ENCODE measurements at regions of chr2 and their contacts with region 1.

Region 1: DNA sequence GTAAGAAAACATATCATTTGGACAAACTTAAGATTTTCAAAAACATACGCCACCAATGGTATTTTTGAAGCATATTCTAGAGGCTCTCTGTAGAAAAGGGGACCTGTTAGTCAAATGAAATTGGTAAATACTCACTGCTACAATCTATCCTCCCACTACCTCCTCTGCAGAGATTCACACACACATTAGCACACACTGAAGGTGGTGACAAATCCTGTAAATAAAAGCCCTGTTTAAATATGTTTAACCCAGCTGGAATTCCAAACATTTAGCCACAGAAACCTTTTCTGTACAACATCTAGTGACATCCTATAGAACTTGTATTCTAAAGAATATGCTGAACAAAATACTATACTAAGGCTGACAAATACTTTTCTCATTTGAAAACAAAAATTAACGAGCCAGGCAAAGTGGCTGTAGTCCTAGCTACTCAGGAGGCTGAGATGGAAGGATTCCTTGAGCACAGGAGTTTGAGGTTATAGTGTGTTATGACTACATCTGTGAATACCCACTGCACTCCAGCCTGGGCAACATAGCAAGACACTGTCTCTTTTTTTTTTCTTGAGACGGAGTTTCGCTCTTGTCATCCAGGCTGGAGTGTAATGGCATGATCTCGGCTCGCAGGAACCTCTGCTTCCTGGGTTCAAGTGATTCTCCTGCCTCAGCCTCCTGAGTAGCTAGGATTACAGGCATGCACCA is 25.9 kb downstream of the ALS2 start:
- DNase-seq: peak in 1 of 2 experiments; percentile 39
- H3K4me3 ChIP-seq: no peak overlapping the region
- H3K4me3 Mint-ChIP-seq: no peak overlapping the region
- H3K27ac Mint-ChIP-seq: peak overlapping the region; percentile 56
- H3K4me1 ChIP-seq: peaks cover 36% of the 10 kb centered on the region
- H3K4me1 Mint-ChIP-seq: peaks cover 29% of the 10 kb centered on the region
- H3K27me3 ChIP-seq: no peaks in the 10 kb centered on the region
- H3K27me3 Mint-ChIP-seq: no peaks in the 10 kb centered on the region
- CTCF ChIP-seq: no peak

Region 2: DNA sequence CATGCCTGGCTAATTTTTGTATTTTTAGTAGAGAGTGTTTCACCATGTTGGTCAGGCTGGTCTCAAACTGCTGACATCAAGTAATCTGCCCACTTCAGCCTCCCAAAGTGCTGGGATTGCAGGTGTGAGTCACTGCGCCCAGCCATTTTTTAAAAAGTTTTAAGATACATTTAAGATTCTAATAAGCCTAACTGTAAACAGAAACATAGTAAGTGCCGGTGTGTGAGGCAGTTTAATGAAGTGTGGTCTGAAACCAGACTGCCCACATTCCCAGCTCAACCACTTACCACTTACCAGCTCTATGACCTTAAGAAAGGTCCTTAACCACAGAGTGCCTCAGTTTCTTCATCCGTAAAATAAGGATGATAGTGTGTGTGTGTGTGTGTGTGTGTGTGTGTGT is 154.0 kb before region 1 on chr2:
- CTCF ChIA-PET with region 1: no interaction called
- POLR2A ChIA-PET with region 1: no interaction called
- intact Hi-C with region 1: loop called (anchors 5 kb)
- DNase-seq: no peak
- H3K4me3 ChIP-seq: no peak overlapping the region
- H3K4me3 Mint-ChIP-seq: no peak overlapping the region
- H3K27ac Mint-ChIP-seq: no peak overlapping the region
- H3K4me1 ChIP-seq: no peaks in the 10 kb centered on the region
- H3K4me1 Mint-ChIP-seq: no peaks in the 10 kb centered on the region
- H3K27me3 ChIP-seq: no peaks in the 10 kb centered on the region
- H3K27me3 Mint-ChIP-seq: peaks cover 7% of the 10 kb centered on the region
- CTCF ChIP-seq: no peak

Region 3: DNA sequence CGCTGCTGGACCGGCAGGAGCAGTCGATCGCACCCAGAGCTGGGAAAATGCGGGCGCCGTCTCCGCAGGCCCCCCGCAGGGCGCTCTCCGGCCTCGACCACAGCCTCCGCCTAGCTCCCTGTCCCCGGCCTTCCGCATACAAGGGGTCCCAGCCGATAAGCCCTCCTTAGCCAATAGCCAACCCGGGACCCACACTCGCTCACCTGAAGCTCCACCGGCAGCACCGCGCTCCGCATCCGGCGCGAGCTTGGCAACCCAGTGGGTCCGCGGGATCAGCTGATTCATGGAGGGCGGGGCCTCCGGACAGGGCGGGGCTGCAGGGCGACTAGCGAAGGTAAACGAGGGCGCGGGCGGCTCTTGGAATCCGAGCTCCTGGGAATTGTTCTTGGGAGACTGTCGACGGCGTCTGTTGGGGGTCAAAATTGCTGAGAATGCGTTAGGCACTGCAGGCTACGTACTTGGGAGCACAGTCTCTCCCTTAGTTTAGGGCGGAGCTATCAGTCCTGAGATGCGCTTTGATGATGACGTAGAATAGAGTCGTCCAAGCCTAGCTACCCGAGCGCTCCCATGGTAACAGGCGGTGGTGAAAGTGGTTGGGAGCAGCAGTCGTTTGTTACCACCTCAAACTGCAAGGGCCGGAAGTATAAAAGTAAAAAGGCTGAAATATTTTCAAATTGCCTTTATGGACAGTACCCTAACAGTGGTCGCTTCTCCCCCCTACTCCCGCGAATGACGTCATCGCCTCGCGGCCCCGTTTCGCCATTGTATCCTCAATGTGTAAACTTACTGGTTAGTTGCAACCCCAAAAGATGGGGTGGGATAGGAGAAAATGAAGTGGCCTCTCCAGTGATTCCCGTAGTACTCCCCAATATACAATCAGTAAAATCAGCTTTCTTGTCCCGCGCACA is 26.1 kb after region 1 on chr2 and contains the start of gene ALS2:
- CTCF ChIA-PET with region 1: no interaction called
- POLR2A ChIA-PET with region 1: interaction called, 3 read pairs
- intact Hi-C with region 1: loop called (anchors 1 kb)
- DNase-seq: peak; percentile 97 to 98
- H3K4me3 ChIP-seq: peak within 1 kb of the TSS; percentile 97
- H3K4me3 Mint-ChIP-seq: peak within 1 kb of the TSS; percentile 85
- H3K27ac Mint-ChIP-seq: peak within 1 kb of the TSS; percentile 85
- H3K4me1 ChIP-seq: peaks cover 21% of the 10 kb centered on the region
- H3K4me1 Mint-ChIP-seq: peaks cover 11% of the 10 kb centered on the region
- H3K27me3 ChIP-seq: no peaks in the 10 kb centered on the region
- H3K27me3 Mint-ChIP-seq: no peaks in the 10 kb centered on the region
- CTCF ChIP-seq: no peak
- total RNA-seq, gene ALS2: 34.2 and 38.3 TPM in 2 replicates

Region 4: GRCh38 chr2:201831469-201831868 is 76.6 kb after region 1 on chr2:
- CTCF ChIA-PET with region 1: no interaction called
- POLR2A ChIA-PET with region 1: no interaction called
- intact Hi-C with region 1: no loop called
- DNase-seq: no peak
- H3K4me3 ChIP-seq: no peak overlapping the region
- H3K4me3 Mint-ChIP-seq: no peak overlapping the region
- H3K27ac Mint-ChIP-seq: no peak overlapping the region
- H3K4me1 ChIP-seq: no peaks in the 10 kb centered on the region
- H3K4me1 Mint-ChIP-seq: no peaks in the 10 kb centered on the region
- H3K27me3 ChIP-seq: no peaks in the 10 kb centered on the region
- H3K27me3 Mint-ChIP-seq: peaks cover under 1% of the 10 kb centered on the region
- CTCF ChIP-seq: no peak

Region 5: DNA sequence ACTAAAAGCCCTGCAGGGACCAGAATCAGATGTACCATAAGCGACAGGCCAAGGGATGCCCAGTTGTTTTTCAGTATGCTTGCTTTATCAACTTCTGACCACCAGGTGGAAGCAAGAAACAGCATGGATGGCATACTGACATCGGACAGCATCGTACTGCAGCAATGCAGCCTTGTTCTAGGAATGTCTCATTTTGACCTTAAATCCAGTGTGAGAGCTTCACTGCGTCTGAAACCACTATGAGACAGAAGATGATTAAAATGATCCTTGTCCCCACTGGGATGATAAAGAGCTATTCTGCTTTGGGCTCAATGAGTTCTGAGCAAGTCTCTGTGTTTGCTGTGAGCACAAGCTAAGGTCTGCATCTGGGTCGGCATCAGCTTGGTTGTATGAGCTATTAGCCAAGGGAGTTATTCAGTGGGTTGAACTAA is 105.8 kb after region 1 on chr2:
- CTCF ChIA-PET with region 1: no interaction called
- POLR2A ChIA-PET with region 1: no interaction called
- intact Hi-C with region 1: no loop called
- DNase-seq: peak; percentile 60 to 77
- H3K4me3 ChIP-seq: no peak overlapping the region
- H3K4me3 Mint-ChIP-seq: no peak overlapping the region
- H3K27ac Mint-ChIP-seq: no peak overlapping the region
- H3K4me1 ChIP-seq: peaks cover 14% of the 10 kb centered on the region
- H3K4me1 Mint-ChIP-seq: peaks cover 18% of the 10 kb centered on the region
- H3K27me3 ChIP-seq: no peaks in the 10 kb centered on the region
- H3K27me3 Mint-ChIP-seq: no peaks in the 10 kb centered on the region
- CTCF ChIP-seq: peak; percentile 79 to 83

Region 6: GRCh38 chr2:202121532-202122162 is 366.8 kb after region 1 on chr2:
- CTCF ChIA-PET with region 1: no interaction called
- POLR2A ChIA-PET with region 1: no interaction called
- intact Hi-C with region 1: no loop called
- DNase-seq: no peak
- H3K4me3 ChIP-seq: no peak overlapping the region
- H3K4me3 Mint-ChIP-seq: no peak overlapping the region
- H3K27ac Mint-ChIP-seq: no peak overlapping the region
- H3K4me1 ChIP-seq: no peaks in the 10 kb centered on the region; the same call in 1 of the 2 replicates
- H3K4me1 Mint-ChIP-seq: peaks cover 3% of the 10 kb centered on the region
- H3K27me3 ChIP-seq: no peaks in the 10 kb centered on the region
- H3K27me3 Mint-ChIP-seq: no peaks in the 10 kb centered on the region
- CTCF ChIP-seq: no peak